ENCODE measurements at regions of chr6 and their contacts with region 1.

Region 1: DNA sequence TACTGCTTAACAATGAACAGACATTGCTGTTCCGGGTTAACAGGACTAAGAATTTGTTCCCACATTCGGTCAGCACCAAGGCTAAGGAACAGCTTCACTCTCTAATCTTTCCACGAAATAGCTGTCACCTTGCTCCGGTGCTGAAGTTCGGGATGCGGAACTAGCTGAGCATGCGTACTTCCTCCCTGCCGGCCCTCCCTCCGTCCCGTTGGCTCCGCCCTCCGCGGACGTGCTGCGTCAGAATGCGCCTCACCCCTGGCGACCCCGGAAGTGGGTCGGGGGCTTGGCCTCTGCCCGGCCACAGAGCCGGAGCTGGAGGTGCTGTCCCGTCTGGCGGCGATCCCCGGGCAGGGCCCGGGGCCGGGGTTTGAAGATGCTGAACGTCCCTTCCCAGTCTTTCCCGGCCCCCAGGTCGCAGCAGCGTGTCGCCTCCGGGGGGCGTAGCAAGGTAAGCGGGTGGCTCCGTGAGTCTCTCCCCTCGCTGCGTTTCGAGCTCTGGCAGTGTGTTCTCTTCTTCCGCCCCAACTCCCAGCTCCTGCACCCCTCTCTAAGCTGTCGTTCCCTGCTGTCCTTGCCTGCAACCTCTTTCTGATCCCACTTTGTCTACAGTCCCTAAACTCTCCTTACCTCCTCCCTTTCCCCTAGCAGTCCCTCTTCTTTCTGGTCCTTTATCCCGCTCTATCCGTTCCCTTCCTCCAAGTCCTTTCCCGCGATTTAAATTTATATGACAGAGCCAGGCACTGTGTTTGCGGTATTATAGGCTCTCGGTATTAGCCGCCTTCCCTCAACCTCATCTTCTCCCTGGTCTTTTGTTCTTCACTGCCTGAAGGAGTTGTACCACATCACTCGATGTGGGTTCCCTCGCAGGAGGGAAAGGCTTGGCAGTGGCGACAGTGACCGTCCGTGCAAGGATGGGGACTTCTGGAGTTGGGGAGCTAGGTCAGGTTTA is at the start of gene CYB5R4:
- DNase-seq: peak; percentile 93
- ATAC-seq: peak; percentile 97
- H3K4me3 Mint-ChIP-seq: peak within 1 kb of the TSS; percentile 98
- H3K27ac Mint-ChIP-seq: peak within 1 kb of the TSS; percentile 86
- H3K4me1 Mint-ChIP-seq: peaks cover 50% of the 10 kb centered on the region
- H3K27me3 Mint-ChIP-seq: peaks cover 13% of the 10 kb centered on the region
- CTCF ChIP-seq: no peak
- total RNA-seq, gene CYB5R4: 35.7 and 37.3 TPM in 2 replicates

Region 2: DNA sequence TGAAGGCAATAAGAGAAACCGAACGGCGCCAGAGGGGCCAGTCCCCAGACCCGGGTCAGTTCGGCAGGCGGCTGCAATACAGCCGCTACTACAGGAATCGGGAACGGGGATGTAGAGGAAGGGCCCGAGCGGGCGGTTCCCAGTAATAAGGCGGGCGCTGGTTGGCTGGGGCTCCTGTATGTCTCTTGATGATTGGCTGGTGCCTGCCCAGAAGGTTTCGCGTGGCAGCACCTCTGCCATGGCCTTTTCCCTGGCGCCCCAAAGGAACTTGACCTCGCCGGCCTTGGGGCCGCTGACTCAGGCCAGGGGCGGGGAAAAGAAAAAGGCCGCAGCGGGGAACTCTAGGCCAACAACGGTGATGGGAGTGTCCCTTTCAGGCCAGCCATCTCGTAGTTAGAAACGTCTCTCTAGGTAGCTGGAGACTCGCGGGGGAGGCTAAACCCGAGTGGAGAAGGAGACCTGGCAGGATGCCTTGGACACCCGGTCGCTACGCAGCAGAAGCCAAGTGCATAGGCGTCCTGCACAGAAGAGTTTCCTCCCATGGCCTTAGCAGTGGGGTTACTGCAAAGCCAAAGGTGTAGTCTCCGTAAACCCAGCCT is 1612.0 kb before region 1 on chr6 and contains the start of gene IBTK:
- CTCF ChIA-PET with region 1: no interaction called
- POLR2A ChIA-PET with region 1: no interaction called
- intact Hi-C with region 1: loop called (anchors 10 kb)
- DNase-seq: peak; percentile 89
- ATAC-seq: peak; percentile 90
- H3K4me3 Mint-ChIP-seq: peak within 1 kb of the TSS; percentile 97
- H3K27ac Mint-ChIP-seq: peak within 1 kb of the TSS; percentile 93
- H3K4me1 Mint-ChIP-seq: peaks cover 33% of the 10 kb centered on the region
- H3K27me3 Mint-ChIP-seq: no peaks in the 10 kb centered on the region
- CTCF ChIP-seq: no peak
- total RNA-seq, gene IBTK: 25.6 and 30.1 TPM in 2 replicates

Region 3: GRCh38 chr6:83192871-83193746 is 666.6 kb before region 1 on chr6 and contains the starts of genes PGM3 and RWDD2A:
- CTCF ChIA-PET with region 1: no interaction called
- POLR2A ChIA-PET with region 1: no interaction called
- intact Hi-C with region 1: loop called (anchors 10 kb)
- DNase-seq: peak; percentile 91
- ATAC-seq: peak; percentile 97
- H3K4me3 Mint-ChIP-seq: peak within 1 kb of the TSS; percentile 96
- H3K27ac Mint-ChIP-seq: peak within 1 kb of the TSS; percentile 91
- H3K4me1 Mint-ChIP-seq: peaks cover 31% of the 10 kb centered on the region
- H3K27me3 Mint-ChIP-seq: no peaks in the 10 kb centered on the region
- CTCF ChIP-seq: no peak
- total RNA-seq, gene PGM3: 18.2 and 20.1 TPM in 2 replicates
- total RNA-seq, gene RWDD2A: 1.7 and 1.8 TPM in 2 replicates

Region 4: DNA sequence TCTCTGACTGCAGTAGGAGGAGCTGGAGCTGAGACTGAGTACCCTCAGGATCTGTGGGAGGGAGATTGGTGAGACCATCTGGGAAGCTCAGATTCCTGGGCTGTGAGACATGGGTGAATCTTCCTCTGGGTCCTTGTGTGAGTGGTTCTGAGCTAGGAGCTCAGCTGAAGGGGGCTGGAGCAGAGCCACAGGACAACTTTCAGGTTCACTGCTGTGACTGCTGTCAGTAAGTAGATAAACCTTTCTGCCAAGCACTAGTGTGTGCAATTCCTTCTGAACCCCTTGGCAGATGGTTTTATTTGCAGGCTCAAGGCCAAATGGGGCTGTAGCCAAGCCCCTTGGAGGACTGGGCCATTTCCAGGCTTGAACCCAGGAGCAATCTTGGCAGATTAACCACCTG is 101.2 kb before region 1 on chr6:
- CTCF ChIA-PET with region 1: no interaction called
- POLR2A ChIA-PET with region 1: no interaction called
- intact Hi-C with region 1: no loop called
- DNase-seq: no peak
- ATAC-seq: no peak
- H3K4me3 Mint-ChIP-seq: no peak overlapping the region
- H3K27ac Mint-ChIP-seq: no peak overlapping the region
- H3K4me1 Mint-ChIP-seq: no peaks in the 10 kb centered on the region
- H3K27me3 Mint-ChIP-seq: peaks cover 5% of the 10 kb centered on the region
- CTCF ChIP-seq: no peak

Region 5: GRCh38 chr6:83884523-83884922 is 24.8 kb after region 1 on chr6:
- CTCF ChIA-PET with region 1: interaction called, 6 read pairs
- POLR2A ChIA-PET with region 1: no interaction called
- intact Hi-C with region 1: loop called (anchors 2 kb)
- DNase-seq: no peak
- ATAC-seq: peak; percentile 76
- H3K4me3 Mint-ChIP-seq: no peak overlapping the region
- H3K27ac Mint-ChIP-seq: no peak overlapping the region
- H3K4me1 Mint-ChIP-seq: peaks cover 45% of the 10 kb centered on the region
- H3K27me3 Mint-ChIP-seq: no peaks in the 10 kb centered on the region
- CTCF ChIP-seq: no peak

Region 6: DNA sequence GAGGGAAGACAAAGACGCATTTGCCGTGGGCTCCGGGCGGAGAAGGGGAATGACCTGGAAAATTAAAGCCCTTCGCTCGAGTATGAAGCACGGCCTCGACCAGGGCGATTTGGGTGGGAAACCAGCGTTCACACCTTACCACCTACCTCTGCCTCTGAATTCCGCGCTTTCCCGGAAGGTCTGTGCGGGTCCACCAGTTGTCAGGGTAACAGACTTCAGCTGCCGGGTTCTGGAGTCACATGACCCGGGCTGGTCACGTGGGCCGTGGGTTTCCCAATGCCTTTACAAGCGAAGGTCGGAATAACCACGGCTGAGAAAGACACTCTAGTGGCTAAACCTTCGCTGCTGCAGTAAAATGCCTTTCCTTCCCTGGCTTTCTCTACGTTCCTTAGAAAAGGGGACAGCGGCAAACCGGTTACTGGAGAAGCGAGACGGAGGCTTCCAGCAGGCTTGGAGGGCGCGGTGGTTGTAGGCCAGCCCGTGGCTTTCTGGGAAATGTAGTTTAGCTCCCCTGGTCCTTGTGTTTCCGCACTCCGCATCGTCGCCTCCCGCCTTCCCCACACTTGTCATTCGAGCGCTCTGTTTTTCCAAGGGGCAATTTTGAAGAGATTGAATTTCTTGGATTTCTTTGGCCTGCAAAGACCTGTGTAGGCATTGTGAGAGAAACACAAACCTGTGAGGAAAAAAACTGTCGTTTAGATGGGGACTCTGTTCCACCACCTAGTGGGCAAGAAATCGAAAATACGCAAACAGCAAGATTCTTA is 367.9 kb after region 1 on chr6 and contains the start of gene CEP162:
- CTCF ChIA-PET with region 1: interaction called, 17 read pairs
- POLR2A ChIA-PET with region 1: interaction called, 21 read pairs
- intact Hi-C with region 1: loop called (anchors 1 kb)
- DNase-seq: peak; percentile 82
- ATAC-seq: peak; percentile 92
- H3K4me3 Mint-ChIP-seq: peak within 1 kb of the TSS; percentile 99
- H3K27ac Mint-ChIP-seq: peak within 1 kb of the TSS; percentile 95
- H3K4me1 Mint-ChIP-seq: peaks cover 19% of the 10 kb centered on the region
- H3K27me3 Mint-ChIP-seq: peaks cover 13% of the 10 kb centered on the region
- CTCF ChIP-seq: no peak
- total RNA-seq, gene CEP162: 7.9 and 13.8 TPM in 2 replicates

Region 7: GRCh38 chr6:85449818-85450759 is 1590.4 kb after region 1 on chr6 and contains the start of gene NT5E:
- CTCF ChIA-PET with region 1: no interaction called
- POLR2A ChIA-PET with region 1: no interaction called
- intact Hi-C with region 1: loop called (anchors 2 kb)
- DNase-seq: peak; percentile 67
- ATAC-seq: peak; percentile 77
- H3K4me3 Mint-ChIP-seq: peak within 1 kb of the TSS; percentile 97
- H3K27ac Mint-ChIP-seq: peak within 1 kb of the TSS; percentile 94
- H3K4me1 Mint-ChIP-seq: peaks cover 68% of the 10 kb centered on the region
- H3K27me3 Mint-ChIP-seq: peaks cover 10% of the 10 kb centered on the region
- CTCF ChIP-seq: no peak
- total RNA-seq, gene NT5E: 5.8 and 6.6 TPM in 2 replicates

Region 8: GRCh38 chr6:85593438-85594196 is 1733.9 kb after region 1 on chr6 and contains the start of gene SNX14:
- CTCF ChIA-PET with region 1: no interaction called
- POLR2A ChIA-PET with region 1: no interaction called
- intact Hi-C with region 1: loop called (anchors 2 kb)
- DNase-seq: peak; percentile 82
- ATAC-seq: peak; percentile 87
- H3K4me3 Mint-ChIP-seq: peak within 1 kb of the TSS; percentile 99
- H3K27ac Mint-ChIP-seq: peak within 1 kb of the TSS; percentile 98
- H3K4me1 Mint-ChIP-seq: peaks cover 47% of the 10 kb centered on the region
- H3K27me3 Mint-ChIP-seq: no peaks in the 10 kb centered on the region
- CTCF ChIP-seq: no peak
- total RNA-seq, gene SNX14: 61.6 and 70.8 TPM in 2 replicates